Activated naive CD4-positive, alpha-beta T cell treated with anti-CD3 and anti-CD28 coated beads, Interleukin-2, amount 10 ng/mL, durations not matched to agents 7 days and 5 days (primary cell): ENCODE measurements at regions of chr6 and their contacts with region 1.

Region 1: DNA sequence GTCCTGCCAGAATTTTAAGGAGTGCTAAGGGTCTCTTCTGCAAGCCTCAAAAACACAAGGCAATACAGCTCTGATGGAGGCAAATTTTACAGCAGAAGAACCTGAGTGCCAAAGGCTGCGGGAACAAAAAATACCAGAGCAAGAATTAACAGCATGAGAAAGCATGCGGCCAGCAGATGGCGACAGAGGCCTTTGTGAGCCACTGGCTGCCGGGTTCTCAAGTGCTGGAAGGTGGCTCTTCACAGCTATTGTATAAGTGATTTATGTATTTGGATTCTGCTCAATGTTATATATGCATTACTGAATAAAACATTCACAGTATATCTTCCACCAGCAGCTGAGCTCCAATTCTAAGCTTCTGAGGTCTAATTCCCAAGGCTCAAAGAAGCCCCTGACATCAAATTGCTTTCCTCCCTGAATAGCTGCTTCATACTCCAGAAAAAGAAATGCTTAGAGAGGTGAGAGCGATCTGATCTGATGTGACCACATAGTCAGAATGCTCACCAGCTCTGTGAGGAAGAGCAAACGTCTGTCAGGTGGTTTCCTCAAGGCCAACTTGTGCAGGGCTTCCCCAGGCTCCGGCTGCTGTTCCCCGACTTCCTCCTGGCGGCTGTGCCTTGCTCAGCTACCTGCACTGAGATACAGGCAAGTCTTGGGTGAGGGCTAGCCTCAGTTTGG is 58.6 kb downstream of the PPP1R3G start:
- DNase-seq: peak; percentile 90
- H3K4me3 Mint-ChIP-seq: no peak overlapping the region
- H3K27ac Mint-ChIP-seq: no peak overlapping the region
- H3K4me1 Mint-ChIP-seq: no peaks in the 10 kb centered on the region
- H3K27me3 Mint-ChIP-seq: no peaks in the 10 kb centered on the region

Region 2: DNA sequence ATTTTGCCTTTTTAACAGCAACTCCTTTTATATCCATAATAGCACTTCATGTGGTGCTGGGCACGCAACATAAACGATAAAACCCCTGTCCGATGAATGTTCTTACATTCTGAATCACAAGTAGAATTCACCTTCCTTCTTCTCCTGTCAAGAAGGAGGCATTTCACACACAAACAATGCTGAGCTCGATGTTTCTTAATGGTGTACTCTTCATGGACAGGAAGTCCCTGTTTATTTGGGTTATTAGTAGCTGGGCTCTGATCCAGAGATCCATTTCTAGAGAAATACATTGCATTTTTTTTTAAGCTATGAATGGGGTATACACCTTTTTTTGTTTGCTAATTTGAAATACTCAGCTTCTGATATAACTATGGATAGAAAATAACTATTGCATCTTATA is 23.7 kb after region 1 on chr6:
- CTCF ChIA-PET with region 1: interaction called, 14 read pairs
- DNase-seq: no peak
- H3K4me3 Mint-ChIP-seq: no peak overlapping the region
- H3K27ac Mint-ChIP-seq: no peak overlapping the region
- H3K4me1 Mint-ChIP-seq: peaks cover 19% of the 10 kb centered on the region
- H3K27me3 Mint-ChIP-seq: no peaks in the 10 kb centered on the region

Region 3: GRCh38 chr6:5214570-5215052 is 70.8 kb after region 1 on chr6:
- CTCF ChIA-PET with region 1: interaction called, 15 read pairs
- DNase-seq: no peak
- H3K4me3 Mint-ChIP-seq: no peak overlapping the region
- H3K27ac Mint-ChIP-seq: no peak overlapping the region
- H3K4me1 Mint-ChIP-seq: peaks cover 11% of the 10 kb centered on the region
- H3K27me3 Mint-ChIP-seq: no peaks in the 10 kb centered on the region

Region 4: GRCh38 chr6:5302995-5303622 is 159.3 kb after region 1 on chr6:
- CTCF ChIA-PET with region 1: interaction called, 67 read pairs
- DNase-seq: peak; percentile 72
- H3K4me3 Mint-ChIP-seq: no peak overlapping the region
- H3K27ac Mint-ChIP-seq: no peak overlapping the region
- H3K4me1 Mint-ChIP-seq: peaks cover 19% of the 10 kb centered on the region
- H3K27me3 Mint-ChIP-seq: no peaks in the 10 kb centered on the region

Region 5: DNA sequence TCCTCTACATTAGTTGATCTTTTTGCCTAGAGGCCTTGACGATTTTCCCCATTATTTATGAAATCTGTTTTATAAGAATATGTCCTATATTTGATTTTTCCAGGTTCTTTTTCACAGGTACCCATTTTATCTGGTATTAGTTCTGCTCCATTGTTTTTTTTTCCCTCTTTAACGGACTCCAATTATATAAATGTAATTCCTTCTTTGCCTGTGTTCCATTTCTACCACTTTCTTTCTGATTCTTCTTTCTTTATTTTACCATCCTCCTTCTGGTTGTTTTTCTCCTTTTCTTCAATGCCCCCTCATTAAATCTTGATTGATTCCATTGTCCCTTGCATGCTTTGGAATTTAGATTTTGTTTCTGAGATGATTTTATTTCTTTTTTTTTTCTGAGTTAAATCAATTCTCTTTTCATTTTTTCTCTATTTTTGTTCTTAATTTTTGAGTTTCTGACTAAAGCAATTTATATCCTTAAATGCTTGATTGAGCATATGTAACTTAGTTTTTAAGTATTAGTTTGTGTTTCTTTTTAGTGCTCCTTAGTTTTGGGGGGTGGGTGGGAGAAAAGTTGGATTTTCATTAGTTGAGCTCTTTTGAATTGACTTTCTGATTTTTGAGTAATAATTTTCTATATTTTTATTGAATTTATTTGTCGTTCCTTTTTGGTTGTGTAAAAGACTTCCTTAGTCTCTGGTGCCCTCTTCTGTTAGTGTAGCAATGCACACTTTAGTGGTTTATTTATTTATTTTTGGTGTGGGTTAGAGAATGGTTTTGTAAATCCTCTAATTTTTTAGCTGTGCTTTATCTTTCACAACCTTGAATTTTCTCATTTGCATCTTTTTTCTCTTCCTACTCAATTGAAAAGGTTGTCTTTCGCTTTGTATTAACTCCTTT is 258.3 kb after region 1 on chr6:
- CTCF ChIA-PET with region 1: interaction called, 22 read pairs
- DNase-seq: no peak
- H3K4me3 Mint-ChIP-seq: no peak overlapping the region
- H3K27ac Mint-ChIP-seq: no peak overlapping the region
- H3K4me1 Mint-ChIP-seq: peaks cover 2% of the 10 kb centered on the region
- H3K27me3 Mint-ChIP-seq: no peaks in the 10 kb centered on the region